Caco-2 (cell line): ENCODE measurements at regions of chr10 and their contacts with region 1.

Region 1: GRCh38 chr10:15725603-15726002 is 5.9 kb upstream of the ITGA8 start:
- DNase-seq: peak in 1 of 2 experiments; percentile 54
- H3K4me3 ChIP-seq: no peak overlapping the region
- H3K4me3 Mint-ChIP-seq: no peak overlapping the region
- H3K27ac Mint-ChIP-seq: no peak overlapping the region
- H3K4me1 ChIP-seq: no peaks in the 10 kb centered on the region
- H3K4me1 Mint-ChIP-seq: no peaks in the 10 kb centered on the region
- H3K27me3 ChIP-seq: no peaks in the 10 kb centered on the region; the same call in 1 of the 2 replicates
- H3K27me3 Mint-ChIP-seq: peaks cover 16% of the 10 kb centered on the region
- CTCF ChIP-seq: peak; percentile 50 to 86

Region 2: DNA sequence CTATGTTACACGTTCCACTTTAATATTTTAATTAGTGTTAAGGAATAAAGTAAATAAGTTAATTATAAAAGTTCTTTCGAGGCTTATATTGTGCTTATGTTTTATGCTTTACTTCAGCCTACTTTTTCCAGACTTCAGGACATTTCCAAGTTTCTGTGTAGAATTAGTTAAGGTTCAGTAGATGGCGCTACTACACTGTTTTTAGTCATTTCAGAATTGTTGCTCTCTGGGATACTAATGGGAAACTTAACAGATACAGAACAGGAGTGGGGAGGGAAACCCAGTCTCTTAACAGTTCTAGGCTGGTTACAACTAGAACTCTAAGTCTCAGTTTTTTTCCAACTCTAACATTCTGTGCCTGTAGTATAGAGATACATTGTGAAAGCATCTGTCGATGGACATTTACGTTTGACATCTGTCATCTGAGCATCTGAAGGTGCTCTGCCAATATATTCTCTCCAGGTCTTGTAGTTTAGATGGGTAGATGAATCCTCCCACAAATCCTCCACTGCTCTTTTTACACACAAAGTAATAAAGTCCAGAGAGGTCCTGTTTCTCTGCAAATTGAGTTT is 297.7 kb before region 1 on chr10:
- CTCF ChIA-PET with region 1: no interaction called
- POLR2A ChIA-PET with region 1: no interaction called
- intact Hi-C with region 1: loop called (anchors 1 kb)
- DNase-seq: no peak
- H3K4me3 ChIP-seq: no peak overlapping the region
- H3K4me3 Mint-ChIP-seq: no peak overlapping the region
- H3K27ac Mint-ChIP-seq: no peak overlapping the region
- H3K4me1 ChIP-seq: peaks cover 4% of the 10 kb centered on the region; the same call in 1 of the 2 replicates
- H3K4me1 Mint-ChIP-seq: peaks cover 6% of the 10 kb centered on the region
- H3K27me3 ChIP-seq: no peaks in the 10 kb centered on the region
- H3K27me3 Mint-ChIP-seq: peaks cover 3% of the 10 kb centered on the region
- CTCF ChIP-seq: peak; percentile 58 to 70

Region 3: GRCh38 chr10:15433850-15434537 is 291.6 kb before region 1 on chr10:
- CTCF ChIA-PET with region 1: interaction called, 4 read pairs
- POLR2A ChIA-PET with region 1: no interaction called
- intact Hi-C with region 1: loop called (anchors 1 kb)
- DNase-seq: peak in 1 of 2 experiments; percentile 74
- H3K4me3 ChIP-seq: peak overlapping the region; percentile 27
- H3K4me3 Mint-ChIP-seq: peak overlapping the region; percentile 70
- H3K27ac Mint-ChIP-seq: no peak overlapping the region
- H3K4me1 ChIP-seq: peaks cover 4% of the 10 kb centered on the region; the same call in 1 of the 2 replicates
- H3K4me1 Mint-ChIP-seq: peaks cover 15% of the 10 kb centered on the region
- H3K27me3 ChIP-seq: no peaks in the 10 kb centered on the region
- H3K27me3 Mint-ChIP-seq: peaks cover 3% of the 10 kb centered on the region
- CTCF ChIP-seq: peak; percentile 79 to 92

Region 4: DNA sequence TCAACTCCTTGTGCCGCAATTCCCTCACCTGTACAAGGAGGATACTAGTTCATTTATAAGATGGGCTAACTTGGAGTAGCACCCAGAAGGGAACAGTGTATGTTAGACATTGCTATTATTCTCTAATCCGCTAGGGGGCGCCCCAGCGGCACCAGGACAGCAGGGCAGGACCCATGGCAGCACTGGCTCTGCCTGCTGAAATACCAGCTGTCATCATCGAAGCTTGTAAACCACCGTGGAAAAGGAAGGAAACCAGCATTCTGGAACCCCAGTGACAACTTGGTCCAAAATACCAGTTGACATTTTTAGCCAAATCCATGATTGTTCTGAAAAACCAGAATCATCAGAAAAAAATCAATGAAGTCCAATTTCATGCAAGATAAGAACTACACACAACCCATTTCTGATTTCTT is 140.3 kb before region 1 on chr10:
- CTCF ChIA-PET with region 1: no interaction called
- POLR2A ChIA-PET with region 1: no interaction called
- intact Hi-C with region 1: loop called (anchors 2 kb)
- DNase-seq: peak; percentile 64 to 72
- H3K4me3 ChIP-seq: no peak overlapping the region
- H3K4me3 Mint-ChIP-seq: no peak overlapping the region
- H3K27ac Mint-ChIP-seq: no peak overlapping the region
- H3K4me1 ChIP-seq: no peaks in the 10 kb centered on the region
- H3K4me1 Mint-ChIP-seq: no peaks in the 10 kb centered on the region
- H3K27me3 ChIP-seq: no peaks in the 10 kb centered on the region
- H3K27me3 Mint-ChIP-seq: peaks cover 12% of the 10 kb centered on the region
- CTCF ChIP-seq: peak; percentile 59 to 87

Region 5: DNA sequence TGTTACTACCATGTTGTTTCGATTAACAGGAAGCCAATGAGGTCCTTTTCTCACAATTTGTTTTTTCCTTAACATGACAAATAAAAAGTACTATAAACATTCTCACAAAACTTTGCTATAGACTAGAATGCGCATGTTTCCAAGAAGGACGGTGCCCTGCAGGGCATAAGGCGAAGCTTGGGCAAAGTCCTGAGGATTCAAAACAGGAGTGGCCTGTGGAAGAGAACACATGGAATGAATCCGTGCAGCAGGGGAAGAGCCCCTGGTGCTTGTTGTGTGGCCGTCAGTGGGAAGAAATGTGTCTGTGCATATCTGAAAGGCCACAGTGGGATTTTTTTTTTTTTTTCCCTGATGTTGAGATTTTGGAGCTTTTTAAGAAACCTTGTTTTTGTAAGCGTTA is 73.5 kb before region 1 on chr10:
- CTCF ChIA-PET with region 1: no interaction called
- POLR2A ChIA-PET with region 1: no interaction called
- intact Hi-C with region 1: loop called (anchors 1 kb)
- DNase-seq: no peak
- H3K4me3 ChIP-seq: no peak overlapping the region
- H3K4me3 Mint-ChIP-seq: no peak overlapping the region
- H3K27ac Mint-ChIP-seq: no peak overlapping the region
- H3K4me1 ChIP-seq: no peaks in the 10 kb centered on the region
- H3K4me1 Mint-ChIP-seq: no peaks in the 10 kb centered on the region
- H3K27me3 ChIP-seq: no peaks in the 10 kb centered on the region
- H3K27me3 Mint-ChIP-seq: peaks cover 18% of the 10 kb centered on the region
- CTCF ChIP-seq: no peak